Mammary epithelial cell (primary cell): ENCODE measurements at regions of chr7 and their contacts with region 1.

Region 1: GRCh38 chr7:134778941-134779740 is at the start of gene CALD1:
- DNase-seq: peak; percentile 99
- H3K4me3 ChIP-seq: peak within 1 kb of the TSS; percentile 60 to 86 (median 78)
- H3K27ac ChIP-seq: peak within 1 kb of the TSS; percentile 88
- H3K4me1 ChIP-seq: peaks cover 37% of the 10 kb centered on the region
- H3K27me3 ChIP-seq: no peaks in the 10 kb centered on the region
- CTCF ChIP-seq: no peak
- total RNA-seq, gene CALD1: 251 to 445 TPM

Region 2: GRCh38 chr7:134710859-134711624 is 68.1 kb before region 1 on chr7:
- CTCF ChIA-PET with region 1: no interaction called
- dilution Hi-C with region 1: no loop called
- in situ Hi-C with region 1: no loop called
- intact Hi-C with region 1: no loop called
- DNase-seq: peak; percentile 47
- H3K4me3 ChIP-seq: no peak overlapping the region
- H3K27ac ChIP-seq: no peak overlapping the region
- H3K4me1 ChIP-seq: peaks cover 20% of the 10 kb centered on the region
- H3K27me3 ChIP-seq: no peaks in the 10 kb centered on the region
- CTCF ChIP-seq: no peak

Region 3: GRCh38 chr7:134724606-134725005 is 54.5 kb before region 1 on chr7:
- CTCF ChIA-PET with region 1: no interaction called
- dilution Hi-C with region 1: no loop called
- in situ Hi-C with region 1: no loop called
- intact Hi-C with region 1: loop called (anchors 2 kb)
- DNase-seq: peak; percentile 40
- H3K4me3 ChIP-seq: no peak overlapping the region
- H3K27ac ChIP-seq: no peak overlapping the region
- H3K4me1 ChIP-seq: no peaks in the 10 kb centered on the region
- H3K27me3 ChIP-seq: no peaks in the 10 kb centered on the region
- CTCF ChIP-seq: peak; percentile 76 to 88

Region 4: DNA sequence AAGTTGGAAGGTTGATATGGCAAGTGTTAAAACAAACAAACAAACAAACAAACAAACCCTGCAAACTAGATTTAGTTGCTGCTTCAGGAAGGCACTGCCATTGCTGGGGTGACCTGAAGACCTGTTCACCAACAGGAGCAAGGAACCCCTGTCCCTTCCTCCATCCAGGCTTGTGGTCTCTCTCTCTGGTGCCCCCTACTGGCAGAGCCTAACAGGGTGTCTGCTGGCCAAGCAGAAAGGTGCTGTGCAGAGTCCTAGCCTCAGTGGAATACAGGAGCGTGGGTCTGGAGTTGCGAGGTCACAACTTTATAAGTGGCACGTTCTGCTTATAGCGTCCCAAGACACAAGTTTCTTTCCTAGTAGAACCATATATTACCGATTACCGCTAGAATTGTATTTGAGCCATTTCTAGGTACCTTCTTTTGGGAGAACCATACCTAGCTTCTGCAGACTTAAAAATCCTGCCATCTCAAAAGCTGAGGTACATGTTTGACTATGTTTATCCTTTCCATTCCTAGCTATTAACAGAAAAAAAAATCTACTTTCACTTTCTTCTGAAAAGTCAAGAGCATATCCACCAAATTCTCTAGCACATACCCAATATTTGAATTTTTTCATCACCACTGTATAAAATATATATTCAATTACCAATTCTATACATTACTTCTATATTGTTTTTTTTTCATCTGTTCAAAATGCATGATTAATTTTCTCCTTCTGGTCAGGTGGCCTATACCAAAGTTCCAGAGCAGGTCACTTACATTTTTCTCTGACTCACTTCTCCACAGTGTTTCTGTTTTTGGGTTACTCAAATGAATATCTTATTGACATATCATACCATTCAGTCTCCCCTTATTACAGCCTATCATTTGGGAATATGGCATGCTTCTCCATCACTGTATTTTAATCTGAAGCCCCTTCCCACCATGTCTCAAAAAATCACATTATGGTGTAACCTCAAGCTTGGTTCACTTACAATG is 28.8 kb before region 1 on chr7:
- CTCF ChIA-PET with region 1: no interaction called
- dilution Hi-C with region 1: no loop called
- in situ Hi-C with region 1: no loop called
- intact Hi-C with region 1: loop called (anchors 1 kb)
- DNase-seq: peak; percentile 20
- H3K4me3 ChIP-seq: no peak overlapping the region
- H3K27ac ChIP-seq: no peak overlapping the region
- H3K4me1 ChIP-seq: peaks cover 17% of the 10 kb centered on the region
- H3K27me3 ChIP-seq: no peaks in the 10 kb centered on the region
- CTCF ChIP-seq: peak; percentile 69 to 77

Region 5: DNA sequence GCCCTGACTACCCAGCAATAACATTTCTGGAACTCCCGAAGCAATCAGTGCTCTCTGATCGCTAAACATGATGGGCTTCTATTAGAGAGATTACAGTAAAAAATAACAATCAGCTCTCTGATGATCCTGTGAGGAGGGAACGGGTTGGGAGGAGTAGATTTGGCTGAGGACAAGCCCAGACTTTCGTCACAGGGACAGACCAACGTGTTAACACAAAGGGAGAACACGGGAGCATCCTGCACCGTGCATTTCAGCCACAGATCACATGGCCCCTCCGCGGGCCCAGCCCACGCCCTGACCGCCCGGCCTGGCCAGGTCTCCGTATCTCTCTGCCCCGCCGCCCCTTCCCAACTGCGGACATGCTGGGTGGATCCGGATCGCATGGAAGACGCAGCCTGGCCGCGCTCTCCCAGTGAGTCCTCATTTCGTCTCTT is 112.1 kb after region 1 on chr7:
- CTCF ChIA-PET with region 1: no interaction called
- dilution Hi-C with region 1: no loop called
- in situ Hi-C with region 1: no loop called
- intact Hi-C with region 1: loop called (anchors 2 kb)
- DNase-seq: peak; percentile 98
- H3K4me3 ChIP-seq: peak overlapping the region; percentile 74 to 90 (median 75)
- H3K27ac ChIP-seq: peak overlapping the region; percentile 88
- H3K4me1 ChIP-seq: peaks cover 37% of the 10 kb centered on the region
- H3K27me3 ChIP-seq: no peaks in the 10 kb centered on the region
- CTCF ChIP-seq: no peak

Region 6: GRCh38 chr7:134954197-134955082 is 175.3 kb after region 1 on chr7:
- CTCF ChIA-PET with region 1: no interaction called
- dilution Hi-C with region 1: no loop called
- in situ Hi-C with region 1: no loop called
- intact Hi-C with region 1: loop called (anchors 5 kb)
- DNase-seq: no peak
- H3K4me3 ChIP-seq: no peak overlapping the region
- H3K27ac ChIP-seq: no peak overlapping the region
- H3K4me1 ChIP-seq: no peaks in the 10 kb centered on the region
- H3K27me3 ChIP-seq: no peaks in the 10 kb centered on the region
- CTCF ChIP-seq: peak; percentile 34 to 47

Region 7: GRCh38 chr7:135023622-135024021 is 244.5 kb after region 1 on chr7:
- CTCF ChIA-PET with region 1: no interaction called
- dilution Hi-C with region 1: no loop called
- in situ Hi-C with region 1: no loop called
- intact Hi-C with region 1: no loop called
- DNase-seq: no peak
- H3K4me3 ChIP-seq: no peak overlapping the region
- H3K27ac ChIP-seq: no peak overlapping the region
- H3K4me1 ChIP-seq: no peaks in the 10 kb centered on the region
- H3K27me3 ChIP-seq: no peaks in the 10 kb centered on the region
- CTCF ChIP-seq: no peak

Region 8: DNA sequence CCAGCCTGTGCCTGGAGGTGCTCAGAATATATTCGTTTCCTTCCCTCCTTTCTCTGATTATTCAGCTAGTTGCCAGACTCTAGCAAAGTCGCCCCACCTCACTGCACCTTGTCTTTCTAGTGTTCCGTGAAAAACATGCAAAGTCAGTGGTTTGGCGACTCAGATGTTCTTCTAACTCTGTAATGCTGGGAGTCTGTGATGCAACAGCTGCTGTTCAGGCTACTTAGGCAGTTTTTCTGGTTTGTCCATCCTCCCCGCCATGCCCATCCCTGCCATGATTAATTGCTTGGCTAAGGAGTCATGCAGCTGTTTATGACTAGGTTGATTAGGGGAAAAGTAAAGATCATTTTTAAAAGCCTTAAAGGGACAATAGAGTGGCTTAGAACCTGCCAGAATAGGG is 1098.7 kb after region 1 on chr7:
- CTCF ChIA-PET with region 1: no interaction called
- dilution Hi-C with region 1: no loop called
- in situ Hi-C with region 1: no loop called
- intact Hi-C with region 1: no loop called
- DNase-seq: peak; percentile 94
- H3K4me3 ChIP-seq: no peak overlapping the region
- H3K27ac ChIP-seq: no peak overlapping the region
- H3K4me1 ChIP-seq: peaks cover 20% of the 10 kb centered on the region
- H3K27me3 ChIP-seq: no peaks in the 10 kb centered on the region
- CTCF ChIP-seq: no peak